ENCODE measurements at regions of chr6 and their contacts with region 1.

Region 1: GRCh38 chr6:137094411-137095008 is 49.7 kb upstream of the IL20RA start:
- DNase-seq: peak; percentile 76
- ATAC-seq: peak; percentile 79
- H3K4me3 Mint-ChIP-seq: no peak overlapping the region
- H3K27ac Mint-ChIP-seq: no peak overlapping the region
- H3K4me1 Mint-ChIP-seq: peaks cover 29% of the 10 kb centered on the region
- H3K27me3 Mint-ChIP-seq: peaks cover 14% of the 10 kb centered on the region

Region 2: DNA sequence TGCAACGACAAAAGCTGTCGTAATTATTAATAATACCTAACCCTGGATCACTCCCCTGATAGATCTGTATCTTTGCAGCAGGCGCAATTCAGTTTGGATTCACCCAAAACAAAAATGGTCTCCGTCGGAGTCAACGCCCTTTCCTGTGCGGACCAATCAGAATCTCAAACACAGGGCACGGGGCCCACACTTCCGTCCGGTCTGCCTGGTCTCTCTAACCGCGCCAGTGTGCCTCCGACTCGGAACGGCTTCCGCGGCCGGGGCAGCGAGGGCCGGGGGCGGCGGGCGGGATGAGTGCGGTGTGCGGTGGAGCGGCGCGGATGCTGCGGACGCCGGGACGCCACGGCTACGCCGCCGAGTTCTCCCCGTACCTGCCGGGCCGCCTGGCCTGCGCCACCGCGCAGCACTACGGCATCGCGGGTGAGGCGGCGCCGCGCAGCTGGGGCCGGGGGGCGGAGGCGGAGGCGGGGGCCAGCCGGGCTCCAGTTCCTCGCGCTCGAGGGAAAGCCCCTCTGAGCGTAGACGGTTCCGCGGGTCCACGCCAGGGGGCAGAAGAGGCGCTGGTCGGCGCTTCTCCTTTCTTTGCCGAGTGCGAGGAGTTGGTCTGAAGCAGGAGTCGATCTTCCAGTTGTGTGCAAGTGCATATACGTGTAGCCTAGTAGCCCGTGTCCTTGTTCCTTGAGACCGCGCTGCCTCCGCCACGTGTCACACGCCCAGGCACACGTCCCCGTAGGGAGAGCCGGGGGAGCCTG is 272.0 kb before region 1 on chr6 and contains the start of gene PEX7:
- CTCF ChIA-PET with region 1: no interaction called
- POLR2A ChIA-PET with region 1: no interaction called
- DNase-seq: peak; percentile 93
- ATAC-seq: peak; percentile 97
- H3K4me3 Mint-ChIP-seq: peak within 1 kb of the TSS; percentile 91
- H3K27ac Mint-ChIP-seq: peak within 1 kb of the TSS; percentile 92
- H3K4me1 Mint-ChIP-seq: peaks cover 14% of the 10 kb centered on the region
- H3K27me3 Mint-ChIP-seq: peaks cover 7% of the 10 kb centered on the region
- total RNA-seq, gene PEX7: 2.5 to 3.3 TPM

Region 3: DNA sequence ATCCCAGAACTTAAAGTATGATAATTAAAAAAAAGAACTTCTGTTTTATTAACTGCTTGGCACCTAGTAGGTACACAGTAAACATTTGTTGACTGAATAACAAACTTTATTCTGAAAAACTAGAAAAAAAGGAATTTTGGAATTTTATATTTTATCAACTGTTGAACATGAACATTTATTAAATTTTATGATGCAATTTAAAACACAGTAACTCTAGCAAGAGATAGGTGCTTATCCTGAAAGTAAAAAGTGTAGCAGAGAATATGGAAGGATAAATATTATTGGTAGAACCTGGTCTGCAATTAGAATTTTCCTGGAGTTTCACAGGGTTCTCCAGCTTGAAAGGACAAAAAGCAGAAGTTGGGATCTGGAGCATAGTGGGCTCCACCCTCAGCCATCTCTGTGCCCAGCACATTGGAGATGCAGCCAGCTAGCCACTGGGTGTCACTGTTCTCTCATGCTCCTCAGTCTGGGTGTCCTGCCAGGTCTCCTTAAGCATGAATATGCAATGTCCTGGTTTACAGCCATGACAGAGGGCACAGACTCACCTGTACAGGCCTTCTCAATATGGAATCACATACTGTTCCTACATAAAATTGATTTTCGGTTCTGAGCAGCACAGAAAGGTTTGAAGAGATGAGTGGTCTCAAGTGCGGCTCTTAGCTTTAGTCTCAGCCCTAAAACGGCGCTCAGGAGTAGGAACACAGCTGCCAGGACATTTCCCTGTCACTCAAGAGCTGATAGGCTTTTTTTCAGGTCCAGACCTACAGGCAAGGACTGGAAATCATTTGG is 18.0 kb before region 1 on chr6:
- CTCF ChIA-PET with region 1: interaction called, 24 read pairs
- POLR2A ChIA-PET with region 1: no interaction called
- DNase-seq: peak; percentile 70
- ATAC-seq: peak; percentile 92
- H3K4me3 Mint-ChIP-seq: no peak overlapping the region
- H3K27ac Mint-ChIP-seq: no peak overlapping the region
- H3K4me1 Mint-ChIP-seq: no peaks in the 10 kb centered on the region
- H3K27me3 Mint-ChIP-seq: peaks cover 44% of the 10 kb centered on the region

Region 4: GRCh38 chr6:137105375-137105774 is 10.9 kb after region 1 on chr6:
- CTCF ChIA-PET with region 1: interaction called, 10 read pairs
- POLR2A ChIA-PET with region 1: no interaction called
- DNase-seq: no peak
- ATAC-seq: no peak
- H3K4me3 Mint-ChIP-seq: no peak overlapping the region
- H3K27ac Mint-ChIP-seq: no peak overlapping the region
- H3K4me1 Mint-ChIP-seq: peaks cover 41% of the 10 kb centered on the region
- H3K27me3 Mint-ChIP-seq: peaks cover 6% of the 10 kb centered on the region

Region 5: GRCh38 chr6:137165375-137166246 is 71.1 kb after region 1 on chr6:
- CTCF ChIA-PET with region 1: interaction called, 38 read pairs
- POLR2A ChIA-PET with region 1: no interaction called
- DNase-seq: peak; percentile 84
- ATAC-seq: peak; percentile 79
- H3K4me3 Mint-ChIP-seq: peak overlapping the region; percentile 64
- H3K27ac Mint-ChIP-seq: peak overlapping the region; percentile 85
- H3K4me1 Mint-ChIP-seq: peaks cover 48% of the 10 kb centered on the region
- H3K27me3 Mint-ChIP-seq: peaks cover 11% of the 10 kb centered on the region

Region 6: DNA sequence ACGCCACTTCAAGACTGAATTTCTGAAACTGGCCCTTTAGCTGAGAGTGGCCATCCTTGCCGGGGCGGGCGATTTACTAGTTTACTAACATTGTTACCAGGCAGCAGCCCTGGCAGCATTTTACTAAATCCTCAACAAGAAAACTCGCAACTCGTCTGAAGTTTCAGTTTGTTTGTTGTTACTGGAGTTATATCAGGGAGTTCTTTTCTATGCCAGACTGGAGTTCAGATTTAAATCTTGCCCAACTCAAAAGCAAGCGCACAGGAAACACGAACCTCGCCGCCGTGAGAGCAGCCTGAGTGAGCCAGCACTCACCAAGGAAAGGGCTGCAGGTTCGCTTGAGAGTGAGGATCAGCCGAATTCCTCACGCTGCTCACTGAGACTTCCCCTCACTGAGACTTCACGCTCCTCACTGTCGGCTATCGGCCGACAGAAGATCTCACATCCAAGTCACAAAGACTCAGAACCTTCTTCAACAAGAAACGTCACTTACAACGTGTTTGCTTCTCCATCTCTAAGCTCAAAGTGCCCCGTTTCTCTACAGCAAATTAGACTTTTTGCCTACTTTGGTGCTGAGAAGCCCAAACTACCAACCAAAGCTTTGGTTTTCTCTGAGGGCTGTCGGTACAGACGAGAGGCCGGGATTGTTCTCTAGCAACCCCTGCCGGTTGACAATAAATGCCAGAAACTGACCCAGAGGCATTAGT is 320.8 kb after region 1 on chr6:
- CTCF ChIA-PET with region 1: interaction called, 13 read pairs
- POLR2A ChIA-PET with region 1: no interaction called
- DNase-seq: peak; percentile 79
- ATAC-seq: peak; percentile 98
- H3K4me3 Mint-ChIP-seq: peak overlapping the region; percentile 73
- H3K27ac Mint-ChIP-seq: peak overlapping the region; percentile 22
- H3K4me1 Mint-ChIP-seq: peaks cover 9% of the 10 kb centered on the region
- H3K27me3 Mint-ChIP-seq: peaks cover 7% of the 10 kb centered on the region

Measured in activated CD8-positive, alpha-beta T cell treated with anti-CD3 and anti-CD28 coated beads, Interleukin-2, amount 10 ng/mL, durations not matched to agents 7 days and 5 days (primary cell).